ENCODE measurements at regions of chr1 and their contacts with region 1.

Region 1: GRCh38 chr1:146036965-146037646 is 15.6 kb upstream of the HJV start:
- DNase-seq: peak; percentile 81
- H3K4me3 ChIP-seq: peak overlapping the region; percentile 74
- H3K27ac ChIP-seq: peak overlapping the region; percentile 88
- H3K4me1 ChIP-seq: no peaks in the 10 kb centered on the region
- H3K27me3 ChIP-seq: no peaks in the 10 kb centered on the region
- CTCF ChIP-seq: no peak

Region 2: DNA sequence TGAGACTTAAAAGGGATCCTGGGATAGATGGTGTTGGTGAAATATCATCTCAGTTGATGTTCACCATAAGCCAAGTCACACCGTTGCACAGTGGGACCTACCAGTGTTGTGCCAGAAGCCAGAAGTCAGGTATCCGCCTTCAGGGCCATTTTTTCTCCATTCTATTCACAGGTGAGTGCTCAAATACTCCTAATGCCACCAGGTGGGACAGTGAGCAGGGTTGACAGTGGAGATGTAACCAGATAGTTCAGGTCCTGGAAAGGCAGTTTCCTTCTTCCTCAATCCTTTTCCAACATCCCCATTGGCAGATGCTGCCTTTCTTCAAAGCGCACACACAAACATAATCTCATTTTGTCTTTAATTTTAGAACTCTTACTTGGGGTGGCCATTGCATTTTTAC is 306.2 kb before region 1 on chr1:
- CTCF ChIA-PET with region 1: no interaction called
- POLR2A ChIA-PET with region 1: no interaction called
- intact Hi-C with region 1: no loop called
- DNase-seq: no peak
- H3K4me3 ChIP-seq: no peak overlapping the region
- H3K27ac ChIP-seq: no peak overlapping the region
- H3K4me1 ChIP-seq: no peaks in the 10 kb centered on the region
- H3K27me3 ChIP-seq: no peaks in the 10 kb centered on the region
- CTCF ChIP-seq: no peak; the same call in 1 of the 2 replicates

Region 3: DNA sequence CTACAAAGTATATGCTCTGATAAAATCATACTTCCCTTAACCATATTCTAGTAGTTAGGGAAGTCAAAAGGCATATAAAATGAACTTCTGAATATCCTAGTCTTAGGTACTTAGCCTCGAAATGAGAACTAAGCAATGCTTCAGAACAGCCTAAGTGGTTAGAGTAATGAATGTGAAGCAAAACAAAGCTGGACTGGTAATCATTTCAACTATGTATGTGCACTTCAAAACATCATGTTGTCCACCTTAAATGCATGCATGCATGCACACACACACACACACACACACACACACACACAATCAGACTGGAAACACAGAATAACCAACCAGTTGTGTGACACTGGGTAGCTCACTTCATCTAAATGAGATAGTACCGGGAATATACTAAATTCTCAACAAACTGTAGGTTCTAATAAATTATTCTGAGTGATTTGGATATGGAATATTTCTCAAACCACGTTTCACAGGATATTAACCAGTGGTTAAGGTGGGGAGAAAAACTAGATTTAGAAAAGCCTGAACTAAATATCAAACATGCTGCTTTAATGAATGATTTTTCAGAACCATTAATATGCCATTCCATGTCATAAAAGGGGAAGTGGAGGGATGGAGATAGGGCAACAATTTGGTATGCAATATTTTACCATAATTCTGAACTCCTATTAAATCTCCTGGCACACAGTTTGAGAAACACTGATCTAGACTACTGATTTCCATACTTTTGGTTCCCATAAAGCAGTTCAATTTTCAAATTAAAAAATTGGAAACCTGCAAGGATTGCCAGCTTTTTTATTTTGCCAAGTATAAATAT is 232.7 kb before region 1 on chr1:
- CTCF ChIA-PET with region 1: no interaction called
- POLR2A ChIA-PET with region 1: no interaction called
- intact Hi-C with region 1: no loop called
- DNase-seq: no peak
- H3K4me3 ChIP-seq: no peak overlapping the region
- H3K27ac ChIP-seq: no peak overlapping the region
- H3K4me1 ChIP-seq: peaks cover 7% of the 10 kb centered on the region; the same call in 1 of the 2 replicates
- H3K27me3 ChIP-seq: no peaks in the 10 kb centered on the region
- CTCF ChIP-seq: no peak

Region 4: GRCh38 chr1:145858894-145859490 is 178.1 kb before region 1 on chr1 and contains the start of gene PIAS3:
- CTCF ChIA-PET with region 1: no interaction called
- POLR2A ChIA-PET with region 1: no interaction called
- intact Hi-C with region 1: loop called (anchors 5 kb)
- DNase-seq: peak; percentile 81 to 95
- H3K4me3 ChIP-seq: peak within 1 kb of the TSS; percentile 93
- H3K27ac ChIP-seq: peak within 1 kb of the TSS; percentile 23; the same call in 1 of the 2 replicates
- H3K4me1 ChIP-seq: peaks cover 8% of the 10 kb centered on the region
- H3K27me3 ChIP-seq: no peaks in the 10 kb centered on the region
- CTCF ChIP-seq: no peak
- total RNA-seq, gene PIAS3: 44.3 and 57.8 TPM in 2 replicates

Region 5: GRCh38 chr1:145906954-145907753 is 130.0 kb before region 1 on chr1:
- CTCF ChIA-PET with region 1: interaction called, 12 read pairs
- POLR2A ChIA-PET with region 1: no interaction called
- intact Hi-C with region 1: no loop called
- DNase-seq: no peak
- H3K4me3 ChIP-seq: no peak overlapping the region
- H3K27ac ChIP-seq: no peak overlapping the region
- H3K4me1 ChIP-seq: 0 out of 2 replicates have a peak, but pooled peaks cover 3% of the 10 kb centered on the region
- H3K27me3 ChIP-seq: no peaks in the 10 kb centered on the region
- CTCF ChIP-seq: no peak

Region 6: GRCh38 chr1:145927063-145927886 is 109.8 kb before region 1 on chr1 and contains the start of gene RBM8A:
- CTCF ChIA-PET with region 1: no interaction called
- POLR2A ChIA-PET with region 1: interaction called, 8 read pairs
- intact Hi-C with region 1: loop called (anchors 5 kb)
- DNase-seq: peak; percentile 88 to 96
- H3K4me3 ChIP-seq: peak within 1 kb of the TSS; percentile 97
- H3K27ac ChIP-seq: peak within 1 kb of the TSS; percentile 84
- H3K4me1 ChIP-seq: peaks cover 16% of the 10 kb centered on the region
- H3K27me3 ChIP-seq: no peaks in the 10 kb centered on the region
- CTCF ChIP-seq: peak; percentile 87
- total RNA-seq, gene RBM8A: 129 and 181 TPM in 2 replicates

Region 7: GRCh38 chr1:145949219-145949618 is 87.9 kb before region 1 on chr1:
- CTCF ChIA-PET with region 1: no interaction called
- POLR2A ChIA-PET with region 1: no interaction called
- intact Hi-C with region 1: no loop called
- DNase-seq: no peak
- H3K4me3 ChIP-seq: no peak overlapping the region
- H3K27ac ChIP-seq: no peak overlapping the region
- H3K4me1 ChIP-seq: no peaks in the 10 kb centered on the region
- H3K27me3 ChIP-seq: peaks cover 7% of the 10 kb centered on the region; the same call in 1 of the 2 replicates
- CTCF ChIP-seq: no peak